ENCODE measurements at regions of chr15 and their contacts with region 1.

Region 1: DNA sequence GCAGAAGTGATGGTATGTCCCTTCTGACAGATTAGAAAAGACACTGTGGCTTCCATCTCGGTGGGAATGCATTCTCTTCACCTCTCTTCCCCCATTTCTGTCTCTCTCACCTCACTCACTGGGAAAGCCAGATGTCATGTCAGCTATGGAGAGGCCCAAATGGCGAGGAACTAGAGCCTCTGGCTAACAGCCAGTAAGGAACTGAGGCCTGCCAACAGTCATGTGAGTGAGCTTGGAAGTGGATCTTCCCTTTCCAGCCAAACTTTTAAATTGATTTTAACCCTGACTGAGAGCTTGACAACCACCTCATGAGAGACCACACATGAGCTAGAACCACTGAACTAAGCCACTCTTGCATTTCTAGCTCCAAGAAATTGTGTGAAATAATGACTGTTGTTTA is 35.2 kb upstream of the CDAN1 start:
- DNase-seq: no peak
- H3K4me3 ChIP-seq: no peak overlapping the region
- H3K27ac ChIP-seq: no peak overlapping the region
- H3K4me1 ChIP-seq: peaks cover 8 to 39% (median 33%) of the 10 kb centered on the region in 4 donors
- H3K27me3 ChIP-seq: no peaks in the 10 kb centered on the region
- CTCF ChIP-seq: no peak
- EP300 ChIP-seq: no peak
- POLR2A ChIP-seq: no peak

Region 2: GRCh38 chr15:42640103-42640502 is 132.0 kb before region 1 on chr15:
- intact Hi-C with region 1: no loop called
- DNase-seq: no peak
- H3K4me3 ChIP-seq: no peak overlapping the region
- H3K27ac ChIP-seq: no peak overlapping the region
- H3K4me1 ChIP-seq: no peaks in the 10 kb centered on the region
- H3K27me3 ChIP-seq: no peaks in the 10 kb centered on the region
- CTCF ChIP-seq: no peak
- EP300 ChIP-seq: no peak
- POLR2A ChIP-seq: no peak

Region 3: DNA sequence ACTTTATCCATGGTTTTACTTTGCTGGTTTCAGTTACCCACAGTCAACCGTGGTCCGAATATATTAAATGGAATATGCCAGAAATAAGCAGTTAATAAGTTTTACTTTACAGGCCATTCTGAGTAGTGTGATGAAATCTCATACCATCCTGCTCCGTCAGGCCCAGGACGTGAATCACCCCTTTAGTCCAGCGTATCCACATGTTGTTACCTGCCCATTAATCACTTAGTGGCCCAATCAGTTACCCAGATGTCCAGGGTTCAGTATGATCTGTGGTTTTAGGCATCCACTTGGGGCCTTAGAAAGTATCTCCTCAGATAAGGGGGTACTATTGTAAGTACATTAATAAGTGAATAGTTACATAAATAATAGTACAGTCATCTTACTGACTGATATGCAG is 60.4 kb after region 1 on chr15:
- intact Hi-C with region 1: loop called (anchors 10 kb)
- DNase-seq: no peak
- H3K4me3 ChIP-seq: no peak overlapping the region
- H3K27ac ChIP-seq: no peak overlapping the region
- H3K4me1 ChIP-seq: no peaks in the 10 kb centered on the region
- H3K27me3 ChIP-seq: no peaks in the 10 kb centered on the region
- CTCF ChIP-seq: no peak
- EP300 ChIP-seq: no peak
- POLR2A ChIP-seq: no peak

Measured in esophagus muscularis mucosa (tissue), 4 donors.